PC-3 (cell line): ENCODE measurements at regions of chr1 and their contacts with region 1.

Region 1: GRCh38 chr1:161749509-161750407 is at the start of gene DUSP12:
- DNase-seq: peak; percentile 96
- ATAC-seq: peak; percentile 96
- H3K4me3 ChIP-seq: peak within 1 kb of the TSS; percentile 89
- H3K27ac ChIP-seq: peak within 1 kb of the TSS; percentile 86
- H3K4me1 ChIP-seq: peaks cover 20% of the 10 kb centered on the region
- H3K27me3 ChIP-seq: no peaks in the 10 kb centered on the region
- CTCF ChIP-seq: peak; percentile 36
- total RNA-seq, gene DUSP12: 82.2 and 97.6 TPM in 2 replicates

Region 2: GRCh38 chr1:161185282-161185682 is 564.5 kb before region 1 on chr1:
- CTCF ChIA-PET with region 1: no interaction called
- POLR2A ChIA-PET with region 1: no interaction called
- intact Hi-C with region 1: loop called (anchors 10 kb)
- DNase-seq: no peak
- ATAC-seq: no peak
- H3K4me3 ChIP-seq: no peak overlapping the region
- H3K27ac ChIP-seq: no peak overlapping the region
- H3K4me1 ChIP-seq: peaks cover 15% of the 10 kb centered on the region
- H3K27me3 ChIP-seq: no peaks in the 10 kb centered on the region
- CTCF ChIP-seq: no peak

Region 3: DNA sequence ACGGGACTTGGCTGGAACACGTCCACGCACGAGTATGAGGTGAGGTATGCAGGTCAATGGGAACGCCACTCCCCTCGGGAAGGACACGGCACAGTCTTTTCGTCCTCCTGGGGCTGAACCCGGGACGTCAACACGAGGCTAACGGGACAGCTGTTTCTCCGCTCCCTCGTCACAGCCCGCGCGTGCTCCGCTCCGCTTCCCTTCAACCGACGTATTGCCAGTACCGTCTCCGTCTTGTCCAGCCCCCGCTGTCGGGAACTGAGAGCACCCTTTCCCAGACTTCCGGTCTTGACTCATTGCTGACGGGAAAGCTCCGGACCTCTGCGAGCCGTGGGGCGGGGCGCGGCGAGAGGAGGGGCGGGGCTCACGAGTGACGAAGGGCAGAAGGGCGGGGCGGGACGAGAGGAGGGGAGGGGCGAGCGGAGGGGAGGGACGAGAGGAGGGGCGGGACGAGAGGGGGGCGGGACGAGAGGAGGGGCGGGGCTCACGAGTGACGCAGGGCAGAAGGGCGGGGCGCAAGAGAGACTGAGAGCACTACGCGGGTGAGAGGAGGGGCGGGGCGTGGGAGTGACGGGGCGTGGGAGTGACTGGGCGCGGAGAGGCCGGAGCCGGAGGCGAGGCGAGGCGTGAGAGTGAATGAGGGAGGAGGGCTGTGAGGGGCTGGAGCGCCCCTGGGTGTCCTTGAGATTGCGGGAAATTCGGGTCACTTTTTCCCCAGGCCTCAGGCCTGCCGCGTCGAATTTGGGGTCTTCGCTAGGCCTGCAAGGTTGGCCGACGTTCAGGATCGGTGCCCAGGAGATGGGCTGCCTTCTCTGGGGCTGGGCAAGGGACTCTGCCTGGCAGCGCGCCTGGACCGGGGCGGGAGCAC is 359.8 kb before region 1 on chr1:
- CTCF ChIA-PET with region 1: no interaction called
- POLR2A ChIA-PET with region 1: no interaction called
- intact Hi-C with region 1: loop called (anchors 10 kb)
- DNase-seq: peak; percentile 98
- ATAC-seq: peak; percentile 87
- H3K4me3 ChIP-seq: peak overlapping the region; percentile 86
- H3K27ac ChIP-seq: peak overlapping the region; percentile 70
- H3K4me1 ChIP-seq: peaks cover 12% of the 10 kb centered on the region
- H3K27me3 ChIP-seq: no peaks in the 10 kb centered on the region
- CTCF ChIP-seq: no peak

Region 4: GRCh38 chr1:161691846-161692245 is 57.9 kb before region 1 on chr1:
- CTCF ChIA-PET with region 1: no interaction called
- POLR2A ChIA-PET with region 1: no interaction called
- intact Hi-C with region 1: no loop called
- DNase-seq: no peak
- ATAC-seq: no peak
- H3K4me3 ChIP-seq: no peak overlapping the region
- H3K27ac ChIP-seq: no peak overlapping the region
- H3K4me1 ChIP-seq: no peaks in the 10 kb centered on the region
- H3K27me3 ChIP-seq: no peaks in the 10 kb centered on the region
- CTCF ChIP-seq: no peak

Region 5: GRCh38 chr1:161726596-161727457 is 22.9 kb before region 1 on chr1:
- CTCF ChIA-PET with region 1: no interaction called
- POLR2A ChIA-PET with region 1: no interaction called
- intact Hi-C with region 1: no loop called
- DNase-seq: peak; percentile 81
- ATAC-seq: peak; percentile 62
- H3K4me3 ChIP-seq: peak overlapping the region; percentile 85
- H3K27ac ChIP-seq: peak overlapping the region; percentile 72
- H3K4me1 ChIP-seq: peaks cover 77% of the 10 kb centered on the region
- H3K27me3 ChIP-seq: no peaks in the 10 kb centered on the region
- CTCF ChIP-seq: no peak

Region 6: GRCh38 chr1:161738627-161739287 is 11.0 kb before region 1 on chr1:
- CTCF ChIA-PET with region 1: interaction called, 10 read pairs
- POLR2A ChIA-PET with region 1: interaction called, 5 read pairs
- intact Hi-C with region 1: no loop called
- DNase-seq: peak; percentile 91
- ATAC-seq: peak; percentile 58
- H3K4me3 ChIP-seq: no peak overlapping the region
- H3K27ac ChIP-seq: no peak overlapping the region
- H3K4me1 ChIP-seq: peaks cover 47% of the 10 kb centered on the region
- H3K27me3 ChIP-seq: no peaks in the 10 kb centered on the region
- CTCF ChIP-seq: peak; percentile 92

Region 7: GRCh38 chr1:161766102-161766981 is 16.6 kb after region 1 on chr1 and contains the start of gene ATF6:
- CTCF ChIA-PET with region 1: no interaction called
- POLR2A ChIA-PET with region 1: no interaction called
- intact Hi-C with region 1: loop called (anchors 1 kb)
- DNase-seq: peak; percentile 96
- ATAC-seq: peak; percentile 66
- H3K4me3 ChIP-seq: peak within 1 kb of the TSS; percentile 88
- H3K27ac ChIP-seq: peak within 1 kb of the TSS; percentile 67
- H3K4me1 ChIP-seq: peaks cover 26% of the 10 kb centered on the region
- H3K27me3 ChIP-seq: no peaks in the 10 kb centered on the region
- CTCF ChIP-seq: no peak
- total RNA-seq, gene ATF6: 19.2 and 19.7 TPM in 2 replicates

Region 8: GRCh38 chr1:161772397-161772796 is 22.6 kb after region 1 on chr1:
- CTCF ChIA-PET with region 1: no interaction called
- POLR2A ChIA-PET with region 1: interaction called, 12 read pairs
- intact Hi-C with region 1: no loop called
- DNase-seq: no peak
- ATAC-seq: no peak
- H3K4me3 ChIP-seq: no peak overlapping the region
- H3K27ac ChIP-seq: no peak overlapping the region
- H3K4me1 ChIP-seq: peaks cover 17% of the 10 kb centered on the region
- H3K27me3 ChIP-seq: no peaks in the 10 kb centered on the region
- CTCF ChIP-seq: no peak